K562 (cell line): ENCODE measurements at regions of chr10 and their contacts with region 1.

Region 1: GRCh38 chr10:112565434-112566053 is 118.5 kb downstream of the VTI1A start:
- DNase-seq: peak; percentile 12 to 60 (median 21)
- ATAC-seq: peak; percentile 84
- H3K4me3 ChIP-seq: no peak overlapping the region
- H3K27ac ChIP-seq: no peak overlapping the region
- H3K4me1 ChIP-seq: no peaks in the 10 kb centered on the region
- H3K27me3 ChIP-seq: no peaks in the 10 kb centered on the region
- CTCF ChIP-seq: peak; percentile 50 to 68 (median 57)
- EP300 ChIP-seq: no peak
- POLR2A ChIP-seq: no peak
- RAD21 ChIP-seq: peak; percentile 71 to 77

Region 2: DNA sequence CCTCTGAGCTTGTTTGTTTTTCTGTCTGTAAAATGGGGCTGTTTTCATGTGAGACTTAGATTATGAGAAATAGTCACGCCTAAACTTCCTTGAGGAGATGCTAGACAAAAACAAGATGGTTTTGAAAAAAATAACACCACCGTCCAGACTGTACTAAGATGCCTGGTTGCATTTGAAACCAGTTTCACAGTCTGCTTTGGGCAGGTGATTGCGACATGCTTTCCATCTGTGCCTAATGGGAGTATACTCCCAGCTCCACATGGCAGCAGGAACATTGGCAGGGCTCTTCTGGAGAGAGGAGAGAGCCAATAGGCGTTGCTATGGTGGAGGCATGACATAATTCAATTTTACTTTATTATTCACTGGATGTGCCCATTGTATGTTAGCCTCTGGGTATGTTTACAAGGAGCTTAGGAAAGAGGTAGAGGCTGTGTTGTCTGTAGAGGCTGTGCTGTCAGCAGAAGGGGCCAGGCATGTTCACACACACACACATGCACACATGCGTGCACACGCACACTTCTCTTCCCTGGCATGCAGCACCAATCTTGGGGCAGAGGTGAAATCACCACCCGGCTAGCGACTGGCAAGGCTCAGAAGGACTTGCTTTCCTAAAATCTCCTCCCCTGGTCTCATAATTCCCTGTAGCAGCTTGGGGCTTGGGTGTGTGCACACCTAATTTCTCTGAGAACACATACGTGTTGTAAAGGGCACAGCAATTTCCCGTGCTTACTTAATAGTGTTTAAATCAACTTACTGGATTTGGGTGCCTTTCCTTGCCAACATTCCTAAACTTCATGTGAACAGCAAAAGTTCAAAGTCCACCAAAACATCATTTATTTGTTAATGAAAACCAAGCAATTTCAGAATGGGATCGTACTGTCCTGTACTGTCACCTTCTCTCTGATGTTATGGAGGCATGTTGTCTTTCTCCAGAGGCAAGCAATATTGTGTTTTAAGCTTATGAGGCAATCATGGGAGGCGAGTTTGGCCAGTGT is 546.6 kb after region 1 on chr10:
- CTCF ChIA-PET with region 1: no interaction called
- POLR2A ChIA-PET with region 1: no interaction called
- in situ Hi-C with region 1: no loop called
- intact Hi-C with region 1: loop called (anchors 10 kb)
- DNase-seq: no peak
- ATAC-seq: no peak
- H3K4me3 ChIP-seq: no peak overlapping the region
- H3K27ac ChIP-seq: no peak overlapping the region
- H3K4me1 ChIP-seq: no peaks in the 10 kb centered on the region
- H3K27me3 ChIP-seq: peaks cover 0 to 11% of the 10 kb centered on the region in 2 experiments; a peak in 2 of 5 replicates
- CTCF ChIP-seq: no peak
- EP300 ChIP-seq: no peak
- POLR2A ChIP-seq: no peak
- RAD21 ChIP-seq: no peak